IMR-90 (cell line): ENCODE measurements at regions of chr1 and their contacts with region 1.

Region 1: GRCh38 chr1:152577168-152577567 is 3.1 kb downstream of the LCE3D start:
- DNase-seq: no peak
- ATAC-seq: no peak
- H3K4me3 ChIP-seq: no peak overlapping the region
- H3K27ac ChIP-seq: no peak overlapping the region
- H3K4me1 ChIP-seq: no peaks in the 10 kb centered on the region
- H3K27me3 ChIP-seq: no peaks in the 10 kb centered on the region
- CTCF ChIP-seq: no peak
- POLR2A ChIP-seq: no peak
- RAD21 ChIP-seq: no peak

Region 2: DNA sequence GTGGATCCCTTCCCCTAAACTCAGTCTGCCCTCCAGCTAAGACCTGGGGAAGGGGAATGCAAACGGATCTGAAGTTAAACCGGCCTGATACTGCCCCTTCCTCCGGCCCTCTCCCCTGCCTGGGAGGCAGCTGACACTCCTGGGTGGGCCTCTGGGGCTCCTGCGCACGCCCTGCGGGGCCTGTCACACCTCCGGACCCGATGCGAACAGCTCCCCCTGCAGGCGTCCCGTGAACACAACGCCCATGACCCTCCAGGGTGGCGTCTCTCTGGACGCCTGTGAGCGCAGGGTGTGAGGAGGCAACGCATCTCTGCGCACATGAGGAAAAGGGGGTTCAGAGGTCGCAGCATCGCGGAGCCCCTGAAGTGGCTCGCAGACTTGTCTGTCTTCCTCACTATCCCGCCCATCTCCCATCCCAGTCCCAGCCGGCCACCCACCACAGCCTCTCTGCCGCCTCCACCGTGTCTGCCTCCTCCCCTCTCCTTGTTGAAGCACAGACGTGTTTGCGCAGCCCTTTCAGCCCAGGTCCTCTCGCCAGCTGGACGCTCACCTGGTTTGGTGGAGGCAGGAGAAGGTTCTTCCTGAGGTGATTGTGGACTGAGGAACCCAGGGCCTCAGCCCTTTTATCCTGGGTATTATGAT is 46.2 kb after region 1 on chr1:
- CTCF ChIA-PET with region 1: interaction called, 3 read pairs
- POLR2A ChIA-PET with region 1: no interaction called
- dilution Hi-C with region 1: no loop called
- in situ Hi-C with region 1: loop called (anchors 10 kb)
- intact Hi-C with region 1: no loop called
- DNase-seq: no peak
- ATAC-seq: no peak
- H3K4me3 ChIP-seq: no peak overlapping the region
- H3K27ac ChIP-seq: no peak overlapping the region
- H3K4me1 ChIP-seq: no peaks in the 10 kb centered on the region
- H3K27me3 ChIP-seq: no peaks in the 10 kb centered on the region
- CTCF ChIP-seq: 0 out of 2 replicates have a peak, but pooled peaks have one; percentile 3
- POLR2A ChIP-seq: no peak
- RAD21 ChIP-seq: no peak